Prostate gland (tissue), 2 donors: ENCODE measurements at regions of chr16 and their contacts with region 1.

Region 1: DNA sequence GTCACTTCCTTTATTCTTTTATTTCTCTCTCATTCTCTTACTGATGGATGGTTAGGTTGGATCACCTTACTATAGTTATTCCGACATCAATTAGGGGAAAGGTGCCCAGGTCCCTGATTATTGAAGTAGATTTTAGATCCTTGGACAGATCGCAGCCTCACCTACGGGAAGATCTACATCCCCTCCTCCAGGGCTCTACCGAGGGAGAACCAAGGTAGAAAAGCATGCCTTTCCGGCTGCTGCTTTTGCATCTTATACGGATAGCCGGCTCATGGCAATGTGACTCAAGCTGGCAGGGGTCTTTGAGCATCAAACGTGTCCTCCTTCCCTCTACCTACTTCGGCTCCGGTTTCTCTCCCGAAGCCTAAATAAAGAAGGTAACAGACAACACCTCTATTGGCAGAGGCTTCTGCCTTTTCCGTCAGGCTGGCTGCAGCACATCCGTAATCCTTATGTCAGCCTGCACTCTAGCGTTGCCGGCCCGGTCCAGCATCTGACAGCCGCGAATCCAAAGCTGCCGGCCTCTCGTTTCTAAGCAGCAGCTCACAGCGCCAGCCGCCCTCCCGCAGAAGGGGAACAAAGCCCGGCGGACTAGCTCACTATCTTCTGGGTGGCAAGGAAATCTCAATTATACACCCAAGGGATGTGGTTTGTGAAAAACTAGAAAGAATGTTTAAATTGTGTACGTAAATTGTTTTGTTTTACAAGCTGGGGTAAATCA is 46.9 kb downstream of the IRX6 start:
- DNase-seq: peak; percentile 60
- H3K4me3 ChIP-seq: no peak overlapping the region
- H3K27ac ChIP-seq: no peak overlapping the region
- H3K4me1 ChIP-seq: no peaks in the 10 kb centered on the region
- H3K27me3 ChIP-seq: no peaks in the 10 kb centered on the region
- CTCF ChIP-seq: peak in 3 of 4 experiments; percentile 30 to 59 (median 48)
- POLR2A ChIP-seq: no peak

Region 2: GRCh38 chr16:53768593-53768992 is 1602.3 kb before region 1 on chr16:
- intact Hi-C with region 1: loop called (anchors 10 kb)
- DNase-seq: peak; percentile 11
- H3K4me3 ChIP-seq: no peak overlapping the region
- H3K27ac ChIP-seq: no peak overlapping the region
- H3K4me1 ChIP-seq: no peaks in the 10 kb centered on the region
- H3K27me3 ChIP-seq: no peaks in the 10 kb centered on the region
- CTCF ChIP-seq: no peak
- POLR2A ChIP-seq: no peak

Region 3: DNA sequence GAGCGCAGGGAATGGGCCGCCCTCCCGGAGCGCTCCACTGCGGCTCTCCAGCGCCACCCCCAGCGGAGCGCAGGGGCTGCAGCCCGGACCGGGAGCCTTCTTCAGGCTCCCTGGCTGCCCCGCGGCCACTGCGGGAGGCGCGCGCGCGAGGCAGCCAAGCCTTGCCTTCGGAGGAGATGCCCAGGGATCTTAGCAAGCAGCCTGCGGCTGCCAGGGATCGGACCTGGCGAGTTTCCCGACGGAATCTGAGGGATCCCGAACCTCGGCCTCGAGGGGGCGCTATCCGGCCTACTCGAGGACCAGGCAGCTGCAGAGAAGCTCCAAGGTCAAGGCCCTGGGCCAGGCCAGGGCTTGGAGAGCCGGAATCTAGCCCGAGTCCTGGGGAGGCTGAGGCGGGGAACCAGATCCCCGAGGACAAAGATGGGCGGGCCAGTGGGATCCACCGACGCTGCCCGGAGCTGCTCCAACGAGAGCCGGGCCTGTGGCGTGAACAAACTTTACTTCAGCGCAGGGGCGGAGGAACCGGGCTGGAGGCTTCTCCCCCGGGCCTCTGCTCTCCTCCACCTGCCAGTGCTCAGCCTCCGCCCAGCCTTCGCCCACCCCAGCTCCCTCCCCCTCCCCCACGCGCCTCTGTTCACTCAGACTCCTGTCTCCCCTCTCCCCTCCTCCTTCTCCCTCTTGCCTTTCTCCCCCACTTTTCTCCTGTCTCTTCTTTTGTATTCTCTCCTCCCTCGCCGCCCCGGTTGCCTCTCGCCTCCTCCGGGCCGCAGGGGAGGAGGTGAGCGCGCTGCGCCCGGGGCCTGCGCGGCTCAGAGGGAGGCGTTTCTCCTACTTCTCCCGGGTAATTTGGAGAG is 47.1 kb before region 1 on chr16 and contains the start of gene IRX6:
- intact Hi-C with region 1: no loop called
- DNase-seq: no peak
- H3K4me3 ChIP-seq: no peak within 1 kb of the TSS
- H3K27ac ChIP-seq: no peak within 1 kb of the TSS
- H3K4me1 ChIP-seq: no peaks in the 10 kb centered on the region
- H3K27me3 ChIP-seq: peaks cover 23% of the 10 kb centered on the region
- CTCF ChIP-seq: no peak
- POLR2A ChIP-seq: no peak
- total RNA-seq, gene IRX6: 0.27 to 0.28 TPM

Region 4: DNA sequence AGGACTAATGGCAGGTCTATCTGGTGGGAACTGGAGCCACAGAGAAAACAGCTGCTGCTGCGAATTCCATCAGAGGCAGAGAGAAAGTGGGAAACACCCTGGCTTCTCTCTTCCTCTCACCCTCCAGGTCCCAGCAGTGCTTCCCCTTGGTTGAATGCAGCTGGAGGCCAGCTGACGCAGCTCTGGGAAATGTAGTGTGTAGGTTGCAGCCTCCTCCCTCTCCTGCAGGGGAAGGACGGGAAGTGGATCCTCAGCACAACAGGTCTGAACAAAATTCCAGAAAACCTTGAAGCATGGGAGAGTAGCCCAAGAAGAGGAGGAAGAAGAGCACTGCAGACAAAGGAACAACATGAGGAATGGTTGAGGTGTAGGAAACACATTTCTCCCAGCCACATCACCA is 40.3 kb after region 1 on chr16:
- intact Hi-C with region 1: no loop called
- DNase-seq: no peak
- H3K4me3 ChIP-seq: no peak overlapping the region
- H3K27ac ChIP-seq: no peak overlapping the region
- H3K4me1 ChIP-seq: no peaks in the 10 kb centered on the region
- H3K27me3 ChIP-seq: no peaks in the 10 kb centered on the region
- CTCF ChIP-seq: no peak
- POLR2A ChIP-seq: no peak

Region 5: GRCh38 chr16:55638256-55638655 is 267.3 kb after region 1 on chr16:
- intact Hi-C with region 1: no loop called
- DNase-seq: no peak
- H3K4me3 ChIP-seq: no peak overlapping the region
- H3K27ac ChIP-seq: no peak overlapping the region
- H3K4me1 ChIP-seq: no peaks in the 10 kb centered on the region
- H3K27me3 ChIP-seq: no peaks in the 10 kb centered on the region
- CTCF ChIP-seq: no peak
- POLR2A ChIP-seq: no peak

Region 6: GRCh38 chr16:55760310-55761001 is 389.5 kb after region 1 on chr16:
- intact Hi-C with region 1: no loop called
- DNase-seq: no peak
- H3K4me3 ChIP-seq: no peak overlapping the region
- H3K27ac ChIP-seq: peak overlapping the region in 1 of 2 donors; percentile 45
- H3K4me1 ChIP-seq: no peaks in the 10 kb centered on the region
- H3K27me3 ChIP-seq: no peaks in the 10 kb centered on the region
- CTCF ChIP-seq: no peak
- POLR2A ChIP-seq: no peak